T-cell (primary cell): ENCODE measurements at regions of chr2 and their contacts with region 1.

Region 1: DNA sequence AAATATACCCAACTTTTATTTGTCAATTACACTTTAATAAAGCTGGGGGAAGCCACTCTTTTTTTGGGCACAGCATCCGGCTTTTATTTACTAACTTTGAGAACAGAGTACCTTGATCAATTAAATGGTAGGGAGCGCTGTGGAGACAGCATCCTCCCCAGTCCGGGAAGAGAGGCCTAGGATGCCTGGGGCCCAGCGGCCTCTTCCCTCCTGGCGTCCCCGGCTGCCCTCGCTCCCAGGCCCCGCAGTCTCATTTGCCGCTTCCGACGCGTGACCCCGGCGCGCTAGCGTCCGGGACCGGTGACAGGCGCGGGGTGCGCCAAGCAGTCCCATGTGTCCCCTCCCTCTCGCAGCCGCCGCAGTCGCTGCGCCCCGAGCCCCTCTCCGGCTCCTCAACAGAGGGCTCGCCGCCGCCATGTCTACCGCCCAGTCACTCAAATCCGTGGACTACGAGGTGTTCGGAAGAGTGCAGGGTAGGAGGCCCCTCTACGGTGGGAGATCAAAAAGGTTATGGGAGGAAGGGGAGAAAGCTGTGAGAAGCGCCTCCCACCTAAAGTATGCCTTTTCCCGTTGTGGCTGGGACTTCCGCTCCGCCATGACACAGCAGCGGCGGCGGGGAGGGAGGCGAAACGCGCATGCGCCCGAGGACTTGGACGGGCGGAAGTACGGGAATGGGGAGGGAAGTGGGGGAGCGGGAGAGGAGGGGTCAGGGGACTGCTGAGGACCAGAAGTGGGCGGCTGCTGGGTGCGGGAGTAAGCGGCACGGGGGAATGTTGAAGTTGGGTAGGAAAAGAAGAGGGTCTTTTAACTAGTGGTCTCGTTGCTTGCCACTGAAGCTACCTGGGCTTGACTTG is at the start of gene ACYP2:
- DNase-seq: peak; percentile 74 to 95 (median 85)
- ATAC-seq: peak; percentile 85 to 87 (median 86)
- H3K4me3 ChIP-seq: peak within 1 kb of the TSS; percentile 68 to 79
- H3K4me3 Mint-ChIP-seq: peak within 1 kb of the TSS; percentile 94 to 98 (median 94)
- H3K27ac ChIP-seq: peak within 1 kb of the TSS; percentile 96
- H3K27ac Mint-ChIP-seq: peak within 1 kb of the TSS; percentile 99
- H3K4me1 ChIP-seq: peaks cover 4 to 6% of the 10 kb centered on the region in 2 experiments
- H3K4me1 Mint-ChIP-seq: peaks cover 12 to 22% (median 18%) of the 10 kb centered on the region in 3 donors
- H3K27me3 ChIP-seq: no peaks in the 10 kb centered on the region
- H3K27me3 Mint-ChIP-seq: no peaks in the 10 kb centered on the region
- total RNA-seq, gene ACYP2: 13.8 to 18.8 (median 15.3) TPM

Region 2: DNA sequence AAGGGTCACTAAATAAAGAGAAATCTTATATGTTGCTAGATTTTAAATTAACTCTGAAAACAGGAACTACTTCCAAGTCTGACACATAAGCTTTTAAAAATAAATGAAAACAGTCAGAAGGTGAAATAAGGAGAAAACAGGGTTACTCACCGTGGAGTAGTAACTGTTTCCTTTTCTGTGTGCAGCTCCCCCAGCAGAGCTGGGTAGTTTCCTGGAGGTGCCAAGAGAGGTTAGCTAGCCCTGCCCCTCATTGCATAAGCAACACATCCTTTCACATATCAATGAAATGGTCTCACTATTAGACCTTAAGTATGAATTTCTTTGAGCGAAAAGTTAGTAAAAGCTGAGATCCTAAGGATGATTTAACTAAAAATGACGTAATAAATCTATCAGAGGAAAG is 201.8 kb before region 1 on chr2:
- CTCF ChIA-PET with region 1: no interaction called
- POLR2A ChIA-PET with region 1: no interaction called
- DNase-seq: peak in 14 of 35 experiments; percentile 4 to 31 (median 14)
- ATAC-seq: peak; percentile 69 to 79 (median 77)
- H3K4me3 ChIP-seq: no peak overlapping the region
- H3K4me3 Mint-ChIP-seq: no peak overlapping the region
- H3K27ac ChIP-seq: no peak overlapping the region
- H3K27ac Mint-ChIP-seq: peak overlapping the region; percentile 22 to 71
- H3K4me1 ChIP-seq: peaks cover 0 to 2% of the 10 kb centered on the region in 2 experiments
- H3K4me1 Mint-ChIP-seq: peaks cover 14 to 17% (median 16%) of the 10 kb centered on the region in 3 donors
- H3K27me3 ChIP-seq: no peaks in the 10 kb centered on the region
- H3K27me3 Mint-ChIP-seq: no peaks in the 10 kb centered on the region

Region 3: DNA sequence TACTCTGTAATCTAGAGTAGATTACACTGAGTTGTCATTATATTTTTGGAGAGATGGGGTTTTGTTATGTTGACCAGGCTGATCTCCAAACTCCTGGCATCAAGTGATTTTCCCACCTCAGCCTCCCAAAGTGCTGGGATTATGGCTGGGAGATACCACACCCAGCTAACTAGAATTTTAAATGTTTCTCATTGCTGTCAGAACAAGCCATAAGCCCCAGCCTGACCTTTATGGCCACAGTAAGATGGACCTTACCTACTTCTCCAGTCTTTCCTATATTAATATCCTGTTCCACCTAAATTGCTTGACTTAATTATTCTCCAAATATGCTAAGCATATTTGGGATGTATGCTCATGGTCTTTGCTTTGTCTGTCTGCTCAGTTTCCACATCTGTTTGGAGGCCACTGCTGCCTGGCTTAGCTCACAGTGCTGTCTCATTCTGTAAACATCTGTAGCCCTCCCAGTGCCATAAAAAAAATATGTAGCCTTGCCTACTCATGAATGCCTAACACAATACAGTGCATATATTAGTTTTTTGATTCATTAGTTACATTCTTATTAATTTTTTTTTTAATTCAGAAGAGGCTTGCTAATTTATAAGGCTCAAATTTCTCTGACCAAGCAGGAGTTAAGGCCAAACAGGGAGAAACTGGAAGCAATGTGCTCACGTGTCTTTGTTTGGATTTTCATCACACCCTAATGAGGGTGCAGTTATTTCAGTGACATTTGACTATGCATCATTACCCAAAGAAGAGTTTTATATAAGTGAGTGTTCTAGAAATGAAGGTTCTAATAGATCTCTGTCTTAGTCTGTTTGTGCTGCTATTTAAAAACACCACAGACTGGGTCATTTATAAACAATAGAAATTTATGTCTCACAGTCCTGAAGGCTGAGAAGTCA is 99.5 kb before region 1 on chr2:
- CTCF ChIA-PET with region 1: interaction called in 1 of 2 experiments, 13 read pairs
- POLR2A ChIA-PET with region 1: no interaction called
- DNase-seq: no peak
- ATAC-seq: no peak
- H3K4me3 ChIP-seq: no peak overlapping the region
- H3K4me3 Mint-ChIP-seq: no peak overlapping the region
- H3K27ac ChIP-seq: no peak overlapping the region
- H3K27ac Mint-ChIP-seq: peak overlapping the region; percentile 34 to 71
- H3K4me1 ChIP-seq: peaks cover 16 to 28% of the 10 kb centered on the region in 2 experiments
- H3K4me1 Mint-ChIP-seq: peaks cover 30 to 53% (median 39%) of the 10 kb centered on the region in 3 donors
- H3K27me3 ChIP-seq: no peaks in the 10 kb centered on the region
- H3K27me3 Mint-ChIP-seq: no peaks in the 10 kb centered on the region

Region 4: DNA sequence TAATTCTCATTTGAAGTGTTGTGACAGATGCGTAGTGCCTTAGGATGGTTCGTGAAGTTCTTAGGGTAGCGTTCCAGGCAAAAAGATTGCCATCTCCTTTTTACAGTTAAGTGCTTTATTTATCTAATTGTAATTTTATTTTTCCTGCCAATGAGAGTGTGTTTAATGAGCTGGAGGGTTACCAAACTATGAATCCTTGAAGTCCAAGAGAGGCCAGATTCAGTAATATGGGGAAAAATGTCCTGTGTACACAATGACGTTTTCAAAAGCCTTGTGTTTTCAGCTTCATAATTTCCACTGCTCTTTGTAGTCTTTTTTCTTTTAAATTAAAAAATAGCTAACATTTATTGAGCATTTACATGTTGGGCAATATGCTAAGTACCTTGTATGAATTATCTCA is 23.7 kb after region 1 on chr2:
- CTCF ChIA-PET with region 1: no interaction called
- POLR2A ChIA-PET with region 1: no interaction called
- DNase-seq: no peak
- ATAC-seq: no peak
- H3K4me3 ChIP-seq: no peak overlapping the region
- H3K4me3 Mint-ChIP-seq: no peak overlapping the region
- H3K27ac ChIP-seq: no peak overlapping the region
- H3K27ac Mint-ChIP-seq: no peak overlapping the region
- H3K4me1 ChIP-seq: no peaks in the 10 kb centered on the region
- H3K4me1 Mint-ChIP-seq: no peaks in the 10 kb centered on the region
- H3K27me3 ChIP-seq: no peaks in the 10 kb centered on the region
- H3K27me3 Mint-ChIP-seq: no peaks in the 10 kb centered on the region

Region 5: GRCh38 chr2:54183975-54184374 is 68.5 kb after region 1 on chr2:
- CTCF ChIA-PET with region 1: no interaction called
- POLR2A ChIA-PET with region 1: no interaction called
- DNase-seq: no peak
- ATAC-seq: no peak
- H3K4me3 ChIP-seq: no peak overlapping the region
- H3K4me3 Mint-ChIP-seq: no peak overlapping the region
- H3K27ac ChIP-seq: no peak overlapping the region
- H3K27ac Mint-ChIP-seq: no peak overlapping the region
- H3K4me1 ChIP-seq: no peaks in the 10 kb centered on the region
- H3K4me1 Mint-ChIP-seq: no peaks in the 10 kb centered on the region
- H3K27me3 ChIP-seq: no peaks in the 10 kb centered on the region
- H3K27me3 Mint-ChIP-seq: no peaks in the 10 kb centered on the region

Region 6: DNA sequence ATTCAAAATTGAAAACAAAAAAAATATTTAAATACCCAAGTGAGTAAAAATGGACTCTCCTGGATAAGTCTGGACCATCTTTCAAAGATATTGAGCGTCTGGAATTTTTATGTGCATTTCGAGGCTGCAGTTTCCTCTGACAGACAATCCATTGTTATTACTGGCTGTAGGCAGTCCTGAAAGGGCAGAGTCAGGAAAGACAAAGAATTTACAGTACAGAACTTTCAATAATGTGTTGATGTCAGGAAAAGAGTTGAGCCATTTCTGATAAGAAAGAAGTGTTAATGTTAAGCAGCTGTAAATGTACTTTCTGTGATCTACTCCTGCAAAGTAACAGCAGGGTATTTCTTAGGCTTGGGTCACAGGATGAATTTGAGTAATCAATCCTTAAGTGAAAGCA is 110.7 kb after region 1 on chr2:
- CTCF ChIA-PET with region 1: interaction called in 1 of 2 experiments, 10 read pairs
- POLR2A ChIA-PET with region 1: no interaction called
- DNase-seq: no peak
- ATAC-seq: no peak
- H3K4me3 ChIP-seq: no peak overlapping the region
- H3K4me3 Mint-ChIP-seq: no peak overlapping the region
- H3K27ac ChIP-seq: no peak overlapping the region
- H3K27ac Mint-ChIP-seq: no peak overlapping the region
- H3K4me1 ChIP-seq: no peaks in the 10 kb centered on the region
- H3K4me1 Mint-ChIP-seq: no peaks in the 10 kb centered on the region
- H3K27me3 ChIP-seq: no peaks in the 10 kb centered on the region
- H3K27me3 Mint-ChIP-seq: no peaks in the 10 kb centered on the region

Region 7: GRCh38 chr2:54341656-54342055 is 226.1 kb after region 1 on chr2:
- CTCF ChIA-PET with region 1: no interaction called
- POLR2A ChIA-PET with region 1: no interaction called
- DNase-seq: no peak
- ATAC-seq: no peak
- H3K4me3 ChIP-seq: no peak overlapping the region
- H3K4me3 Mint-ChIP-seq: no peak overlapping the region
- H3K27ac ChIP-seq: no peak overlapping the region
- H3K27ac Mint-ChIP-seq: no peak overlapping the region
- H3K4me1 ChIP-seq: no peaks in the 10 kb centered on the region
- H3K4me1 Mint-ChIP-seq: no peaks in the 10 kb centered on the region
- H3K27me3 ChIP-seq: peaks cover 0 to 4% of the 10 kb centered on the region in 2 experiments
- H3K27me3 Mint-ChIP-seq: peaks cover 24 to 29% of the 10 kb centered on the region in 2 donors

Region 8: DNA sequence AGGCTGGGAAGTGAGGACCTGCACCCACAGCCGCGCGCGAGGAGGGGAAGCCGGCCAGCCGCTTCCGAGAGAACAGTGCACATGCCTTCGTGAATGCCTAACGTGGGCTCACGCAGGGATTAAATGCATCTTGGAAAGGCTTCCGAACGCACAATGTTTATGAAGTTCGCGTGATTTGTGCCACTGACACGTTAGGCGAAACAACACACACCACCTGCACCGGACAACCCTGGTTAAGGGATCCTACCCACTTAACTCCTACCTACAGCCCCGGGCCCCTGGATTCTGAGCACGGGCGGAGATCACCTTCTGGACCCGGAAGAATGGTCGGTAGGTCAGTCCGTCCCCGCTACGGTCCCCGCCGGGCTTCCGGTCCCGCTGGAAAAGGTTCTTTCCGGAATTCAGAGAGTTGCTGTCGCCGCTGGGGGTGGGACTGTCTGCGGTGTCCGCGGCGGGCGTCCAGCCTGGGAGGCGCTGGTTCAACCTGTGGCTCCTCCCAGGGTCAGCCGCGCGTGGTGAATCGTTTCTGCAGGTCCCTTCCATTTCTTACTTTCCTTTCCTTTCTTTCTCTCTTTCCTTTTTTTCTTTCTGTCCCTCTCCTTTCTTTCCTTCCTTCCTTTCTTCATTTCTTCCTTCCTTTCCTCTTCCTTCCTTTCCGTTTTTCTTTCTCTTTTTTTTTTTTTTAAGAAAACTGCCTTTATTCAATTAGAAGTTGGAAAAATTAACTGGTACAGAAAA is 1153.6 kb after region 1 on chr2 and contains the start of gene MTIF2:
- CTCF ChIA-PET with region 1: no interaction called
- POLR2A ChIA-PET with region 1: interaction called in 1 of 2 experiments, 17 read pairs
- DNase-seq: peak; percentile 64 to 90 (median 79)
- ATAC-seq: peak; percentile 82 to 93 (median 92)
- H3K4me3 ChIP-seq: peak within 1 kb of the TSS; percentile 59 to 97
- H3K4me3 Mint-ChIP-seq: peak within 1 kb of the TSS; percentile 87 to 95 (median 94)
- H3K27ac ChIP-seq: peak within 1 kb of the TSS; percentile 80
- H3K27ac Mint-ChIP-seq: peak within 1 kb of the TSS; percentile 96 to 98
- H3K4me1 ChIP-seq: peaks cover 3 to 16% of the 10 kb centered on the region in 2 experiments
- H3K4me1 Mint-ChIP-seq: peaks cover 22 to 30% (median 25%) of the 10 kb centered on the region in 3 donors
- H3K27me3 ChIP-seq: no peaks in the 10 kb centered on the region
- H3K27me3 Mint-ChIP-seq: peaks cover 0 to 6% of the 10 kb centered on the region in 2 donors
- total RNA-seq, gene MTIF2: 21.1 to 31.5 (median 29.4) TPM